Right cardiac atrium (tissue), 5 donors: ENCODE measurements at regions of chr1 and their contacts with region 1.

Region 1: DNA sequence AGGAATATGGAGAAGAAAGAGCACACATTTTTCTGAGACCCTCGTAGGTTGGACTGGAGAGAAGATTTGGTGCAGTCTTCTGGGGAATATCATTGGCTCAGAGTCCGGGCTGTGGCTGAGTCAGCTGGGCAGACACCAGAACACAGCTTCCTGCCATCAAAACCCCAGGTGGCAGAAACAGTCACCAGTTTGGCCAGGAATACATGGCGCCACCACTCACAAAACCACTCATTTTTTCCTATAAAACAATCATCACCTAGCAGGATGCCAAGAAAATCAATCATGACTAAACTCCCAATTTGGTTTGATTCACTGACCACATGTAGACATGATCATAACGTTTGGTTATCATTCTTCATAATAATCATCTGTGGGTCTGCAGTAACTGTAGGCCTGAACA is 178.1 kb upstream of the PBX1 start:
- DNase-seq: peak in 2 of 3 donors; percentile 30 to 47
- ATAC-seq: peak in 1 of 2 donors; percentile 59
- H3K4me3 ChIP-seq: no peak overlapping the region
- H3K27ac ChIP-seq: no peak overlapping the region
- H3K4me1 ChIP-seq: no peaks in the 10 kb centered on the region
- H3K27me3 ChIP-seq: no peaks in the 10 kb centered on the region

Region 2: DNA sequence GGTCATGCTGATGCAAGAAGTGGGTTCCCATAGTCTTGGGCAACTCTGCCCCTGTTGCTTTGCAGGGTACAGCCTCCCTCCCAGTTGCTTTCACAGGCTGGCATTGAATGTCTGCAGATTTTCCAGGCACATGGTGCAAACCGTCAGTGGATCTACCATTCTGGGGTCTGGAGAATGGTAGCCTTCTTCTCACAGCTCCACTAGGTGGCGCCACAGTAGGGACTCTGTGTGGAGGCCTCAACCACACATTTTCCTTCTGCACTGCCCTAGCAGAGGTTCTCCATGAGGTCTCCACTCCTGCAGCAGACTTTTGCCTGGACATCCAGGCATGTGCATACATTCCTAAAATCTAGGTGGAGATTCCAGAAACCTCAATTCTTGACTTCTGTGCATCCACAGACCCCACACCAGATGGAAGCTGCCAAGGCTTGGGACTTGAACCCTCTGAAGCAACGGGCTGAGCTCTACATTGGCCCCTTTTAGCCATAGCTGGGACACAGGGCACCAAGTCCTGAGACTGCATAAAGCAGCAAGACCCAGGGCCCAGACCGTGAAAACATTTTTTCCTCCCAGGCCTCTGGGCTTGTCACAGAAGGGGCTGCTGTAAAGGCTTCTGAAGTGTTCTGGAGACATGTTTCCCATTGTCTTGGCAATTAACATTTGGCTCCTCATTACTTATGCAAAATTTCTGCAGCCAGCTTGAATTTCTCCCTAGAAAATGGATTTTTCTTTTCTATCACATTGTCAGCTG is 288.1 kb before region 1 on chr1:
- intact Hi-C with region 1: no loop called
- DNase-seq: peak in 2 of 3 donors; percentile 13 to 39
- ATAC-seq: no peak
- H3K4me3 ChIP-seq: no peak overlapping the region
- H3K27ac ChIP-seq: no peak overlapping the region
- H3K4me1 ChIP-seq: no peaks in the 10 kb centered on the region
- H3K27me3 ChIP-seq: no peaks in the 10 kb centered on the region

Region 3: DNA sequence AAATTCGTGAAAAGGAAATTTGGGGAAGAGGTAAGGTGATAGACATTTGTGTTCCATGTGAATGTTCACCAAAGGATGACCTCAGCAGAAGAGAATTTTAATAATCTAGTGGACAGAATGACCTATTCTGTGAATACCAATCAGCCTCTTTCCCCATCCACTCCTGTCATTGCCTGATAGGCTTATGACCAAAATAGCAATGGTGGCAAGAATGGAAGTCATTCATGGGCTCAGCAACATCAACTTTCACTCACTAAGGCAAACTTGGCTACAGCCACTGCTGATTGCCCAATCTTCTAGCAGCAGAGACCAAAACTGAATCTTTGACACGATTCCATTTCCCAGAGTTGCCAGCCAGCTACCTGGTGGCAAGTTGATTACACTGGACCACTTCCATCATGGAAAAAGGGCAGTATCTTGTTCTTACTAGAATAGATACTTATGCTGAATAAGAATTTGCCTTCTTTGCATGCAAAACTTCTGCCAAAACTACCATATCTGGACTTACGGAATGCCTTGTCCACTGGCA is 170.6 kb before region 1 on chr1:
- intact Hi-C with region 1: no loop called
- DNase-seq: no peak
- ATAC-seq: peak in 1 of 2 donors; percentile 22
- H3K4me3 ChIP-seq: no peak overlapping the region
- H3K27ac ChIP-seq: no peak overlapping the region
- H3K4me1 ChIP-seq: no peaks in the 10 kb centered on the region
- H3K27me3 ChIP-seq: no peaks in the 10 kb centered on the region

Region 4: GRCh38 chr1:164296172-164296571 is 84.7 kb before region 1 on chr1:
- intact Hi-C with region 1: no loop called
- DNase-seq: peak; percentile 8 to 52 (median 24)
- ATAC-seq: no peak
- H3K4me3 ChIP-seq: no peak overlapping the region
- H3K27ac ChIP-seq: no peak overlapping the region
- H3K4me1 ChIP-seq: no peaks in the 10 kb centered on the region
- H3K27me3 ChIP-seq: no peaks in the 10 kb centered on the region

Region 5: DNA sequence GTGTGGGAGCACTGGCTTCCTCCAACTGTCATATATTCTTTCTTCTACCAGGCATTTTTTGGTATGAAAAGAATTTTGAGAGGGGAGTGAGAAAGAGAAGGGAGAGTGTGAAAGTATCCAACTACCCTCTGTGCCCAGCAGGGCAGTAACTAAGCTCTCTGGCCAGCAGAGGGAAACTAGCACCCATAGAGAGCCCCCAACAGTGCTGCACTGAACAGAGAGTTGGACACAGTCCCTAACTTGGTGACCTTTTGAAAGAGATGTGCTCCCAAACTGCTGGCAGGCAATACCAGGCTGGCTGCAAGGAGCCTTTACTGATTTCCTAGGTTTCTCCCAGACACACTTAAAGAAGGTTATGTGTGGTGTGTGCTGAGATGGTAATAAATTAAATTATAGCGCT is 59.3 kb after region 1 on chr1:
- intact Hi-C with region 1: loop called in 1 of 4 experiments (anchors 10 kb)
- DNase-seq: peak; percentile 31 to 54 (median 48)
- ATAC-seq: peak; percentile 94 to 95
- H3K4me3 ChIP-seq: no peak overlapping the region
- H3K27ac ChIP-seq: no peak overlapping the region
- H3K4me1 ChIP-seq: peaks cover 2% of the 10 kb centered on the region
- H3K27me3 ChIP-seq: no peaks in the 10 kb centered on the region

Region 6: GRCh38 chr1:164660412-164660772 is 279.5 kb after region 1 on chr1:
- intact Hi-C with region 1: no loop called
- DNase-seq: no peak
- ATAC-seq: peak in 1 of 2 donors; percentile 38
- H3K4me3 ChIP-seq: no peak overlapping the region
- H3K27ac ChIP-seq: no peak overlapping the region
- H3K4me1 ChIP-seq: peaks cover 9% of the 10 kb centered on the region
- H3K27me3 ChIP-seq: no peaks in the 10 kb centered on the region